Gastrocnemius medialis (tissue), 4 donors: ENCODE measurements at regions of chr7 and their contacts with region 1.

Region 1: DNA sequence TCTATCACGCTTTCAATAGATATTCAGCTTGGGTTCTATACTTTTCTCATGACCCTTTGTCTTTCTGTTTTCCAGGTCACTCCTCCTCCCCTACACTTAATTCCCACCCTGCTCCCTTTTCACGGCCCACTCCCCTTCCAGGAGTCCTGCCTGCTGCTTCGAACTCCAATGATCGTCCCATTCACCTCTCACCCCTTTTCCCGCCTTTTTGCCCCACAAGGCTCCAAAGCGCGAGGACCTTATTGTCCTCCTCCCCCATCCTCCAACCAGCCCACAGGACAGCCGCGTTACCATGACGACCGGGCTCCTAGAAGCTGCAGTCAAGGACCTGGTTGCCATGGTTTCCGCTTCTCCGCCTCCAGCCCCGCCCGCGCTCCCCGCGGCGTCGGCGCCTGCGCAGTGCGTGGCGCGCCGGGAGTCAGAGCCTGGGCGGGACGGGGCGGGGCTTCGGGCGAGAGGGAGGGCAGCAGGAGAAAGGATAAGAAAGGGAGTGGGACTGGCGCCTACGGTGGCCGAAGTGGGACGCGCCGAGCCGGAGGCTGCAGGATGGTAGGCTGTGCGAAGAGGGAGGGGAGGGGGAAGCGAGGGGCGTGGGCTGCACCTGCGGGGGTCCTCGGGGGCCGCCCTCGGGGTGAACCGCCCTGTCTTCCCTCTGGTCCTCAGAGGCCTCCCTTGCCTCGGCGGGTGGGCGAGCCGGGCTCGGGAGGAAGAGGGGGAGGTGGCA is at the start of gene AP1S1:
- DNase-seq: peak; percentile 80 to 89
- ATAC-seq: peak; percentile 92 to 95
- H3K4me3 ChIP-seq: peak within 1 kb of the TSS; percentile 81 to 95 (median 90)
- H3K27ac ChIP-seq: peak within 1 kb of the TSS in 2 of 4 donors; percentile 13 to 50
- H3K4me1 ChIP-seq: peaks cover 11 to 13% of the 10 kb centered on the region in 2 donors
- H3K27me3 ChIP-seq: peaks cover 0 to 3% (median 2%) of the 10 kb centered on the region in 3 donors
- CTCF ChIP-seq: no peak
- POLR2A ChIP-seq: no peak
- total RNA-seq, gene AP1S1: 5.5 to 24.4 (median 15.6) TPM

Region 2: GRCh38 chr7:101165075-101165957 is 11.2 kb after region 1 on chr7 and contains the start of gene VGF:
- in situ Hi-C with region 1: no loop called
- intact Hi-C with region 1: loop called (anchors 1 kb)
- DNase-seq: peak; percentile 49 to 76
- ATAC-seq: peak; percentile 72 to 77
- H3K4me3 ChIP-seq: peak within 1 kb of the TSS in 2 of 4 donors; percentile 4 to 36
- H3K27ac ChIP-seq: no peak within 1 kb of the TSS
- H3K4me1 ChIP-seq: peaks cover 18 to 27% of the 10 kb centered on the region in 2 donors
- H3K27me3 ChIP-seq: peaks cover 77 to 90% (median 81%) of the 10 kb centered on the region in 3 donors
- CTCF ChIP-seq: no peak
- POLR2A ChIP-seq: no peak
- total RNA-seq, gene VGF: not detected

Region 3: DNA sequence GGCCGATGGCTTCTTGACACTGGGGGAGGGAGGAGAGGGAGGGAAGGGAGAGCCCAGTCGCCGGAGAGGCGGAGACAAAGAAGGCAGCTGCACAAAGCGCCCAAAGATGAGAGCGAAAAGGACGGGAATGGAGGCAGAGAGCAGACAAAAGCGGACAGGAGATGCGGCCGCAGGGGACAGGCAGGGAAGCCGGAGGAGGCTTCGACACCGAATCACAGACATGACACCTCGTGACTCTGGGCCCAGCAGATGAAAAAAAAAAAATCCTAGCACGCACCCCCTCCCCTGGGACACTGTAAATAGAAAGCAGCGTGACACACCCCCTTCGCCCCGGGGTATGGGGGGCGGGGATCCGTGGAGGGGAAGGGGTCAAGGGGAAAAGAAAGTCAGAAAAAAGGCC is 25.0 kb after region 1 on chr7:
- in situ Hi-C with region 1: no loop called
- intact Hi-C with region 1: no loop called
- DNase-seq: no peak
- ATAC-seq: no peak
- H3K4me3 ChIP-seq: no peak overlapping the region
- H3K27ac ChIP-seq: no peak overlapping the region
- H3K4me1 ChIP-seq: peaks cover 0 to 4% of the 10 kb centered on the region in 2 donors
- H3K27me3 ChIP-seq: peaks cover 64 to 78% (median 73%) of the 10 kb centered on the region in 3 donors
- CTCF ChIP-seq: no peak
- POLR2A ChIP-seq: no peak

Region 4: DNA sequence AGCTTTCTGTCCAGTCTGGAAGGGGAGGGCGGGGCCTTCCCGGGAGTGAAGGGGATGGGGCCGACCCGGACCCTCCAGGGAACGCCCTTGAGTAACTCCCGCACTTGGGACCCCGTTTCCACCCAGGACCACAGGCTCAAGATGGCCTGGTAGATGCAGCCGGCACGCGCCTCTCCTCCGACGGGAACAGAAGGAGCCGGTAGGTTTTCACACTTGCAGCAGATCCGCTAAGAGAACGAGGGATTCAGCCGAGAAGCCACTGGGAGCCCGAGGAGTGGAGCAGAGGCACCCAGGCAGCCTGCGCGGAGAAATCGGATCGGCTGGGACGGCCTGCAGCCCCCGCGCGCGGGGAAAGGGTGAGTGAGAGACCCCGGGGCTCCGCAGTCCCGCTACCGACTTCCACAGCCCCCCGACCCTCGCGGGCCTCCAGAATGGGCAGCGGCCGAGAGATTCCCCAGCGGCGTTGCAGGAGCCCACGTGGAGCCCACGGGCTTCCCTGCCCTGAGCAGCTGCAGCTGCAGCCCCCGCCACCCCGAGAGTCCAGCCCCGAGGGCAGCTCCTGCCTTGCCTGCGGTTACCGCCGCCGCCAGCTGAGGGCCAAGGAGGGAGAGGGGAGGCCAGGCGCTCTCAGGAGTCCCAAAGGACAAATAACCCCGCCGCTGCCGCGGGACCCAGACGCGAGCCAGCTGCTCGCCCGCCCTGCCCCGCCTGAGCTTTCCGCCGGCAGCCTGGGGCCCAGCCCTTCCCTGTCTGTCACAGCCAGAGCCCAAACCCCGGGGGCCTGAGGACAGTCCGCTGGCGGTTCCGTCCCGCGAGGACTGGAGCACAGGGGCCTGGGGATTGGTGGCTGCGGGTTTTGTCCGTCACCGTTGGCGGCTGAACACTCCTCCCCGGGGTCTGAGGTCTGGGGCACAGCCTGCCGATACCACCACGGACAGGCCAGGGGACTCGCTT is 145.7 kb after region 1 on chr7:
- in situ Hi-C with region 1: no loop called
- intact Hi-C with region 1: no loop called
- DNase-seq: no peak
- ATAC-seq: no peak
- H3K4me3 ChIP-seq: peak overlapping the region in 1 of 4 donors; percentile 17
- H3K27ac ChIP-seq: no peak overlapping the region
- H3K4me1 ChIP-seq: no peaks in the 10 kb centered on the region
- H3K27me3 ChIP-seq: peaks cover 70 to 80% (median 80%) of the 10 kb centered on the region in 3 donors
- CTCF ChIP-seq: no peak
- POLR2A ChIP-seq: no peak

Region 5: GRCh38 chr7:101550641-101551541 is 396.8 kb after region 1 on chr7:
- in situ Hi-C with region 1: no loop called
- intact Hi-C with region 1: no loop called
- DNase-seq: peak in 1 of 2 donors; percentile 9
- ATAC-seq: no peak
- H3K4me3 ChIP-seq: no peak overlapping the region
- H3K27ac ChIP-seq: no peak overlapping the region
- H3K4me1 ChIP-seq: no peaks in the 10 kb centered on the region
- H3K27me3 ChIP-seq: no peaks in the 10 kb centered on the region
- CTCF ChIP-seq: no peak
- POLR2A ChIP-seq: no peak